ENCODE measurements at regions of chr20 and their contacts with region 1.

Region 1: GRCh38 chr20:44080646-44081267 is 106.2 kb downstream of the JPH2 start:
- DNase-seq: peak; percentile 84
- ATAC-seq: peak; percentile 96
- H3K4me3 Mint-ChIP-seq: peak overlapping the region; percentile 3
- H3K27ac Mint-ChIP-seq: no peak overlapping the region
- H3K4me1 Mint-ChIP-seq: peaks cover 16% of the 10 kb centered on the region
- H3K27me3 Mint-ChIP-seq: no peaks in the 10 kb centered on the region

Region 2: GRCh38 chr20:43537921-43538877 is 542.6 kb before region 1 on chr20:
- CTCF ChIA-PET with region 1: interaction called, 3 read pairs
- POLR2A ChIA-PET with region 1: no interaction called
- intact Hi-C with region 1: loop called (anchors 1 to 2 kb)
- DNase-seq: peak; percentile 70
- ATAC-seq: peak; percentile 47
- H3K4me3 Mint-ChIP-seq: no peak overlapping the region
- H3K27ac Mint-ChIP-seq: no peak overlapping the region
- H3K4me1 Mint-ChIP-seq: no peaks in the 10 kb centered on the region
- H3K27me3 Mint-ChIP-seq: no peaks in the 10 kb centered on the region

Region 3: GRCh38 chr20:43846516-43846905 is 234.2 kb before region 1 on chr20:
- CTCF ChIA-PET with region 1: interaction called, 3 read pairs
- POLR2A ChIA-PET with region 1: no interaction called
- intact Hi-C with region 1: loop called (anchors 2 kb)
- DNase-seq: peak; percentile 16
- ATAC-seq: peak; percentile 18
- H3K4me3 Mint-ChIP-seq: no peak overlapping the region
- H3K27ac Mint-ChIP-seq: no peak overlapping the region
- H3K4me1 Mint-ChIP-seq: peaks cover 22% of the 10 kb centered on the region
- H3K27me3 Mint-ChIP-seq: no peaks in the 10 kb centered on the region

Region 4: DNA sequence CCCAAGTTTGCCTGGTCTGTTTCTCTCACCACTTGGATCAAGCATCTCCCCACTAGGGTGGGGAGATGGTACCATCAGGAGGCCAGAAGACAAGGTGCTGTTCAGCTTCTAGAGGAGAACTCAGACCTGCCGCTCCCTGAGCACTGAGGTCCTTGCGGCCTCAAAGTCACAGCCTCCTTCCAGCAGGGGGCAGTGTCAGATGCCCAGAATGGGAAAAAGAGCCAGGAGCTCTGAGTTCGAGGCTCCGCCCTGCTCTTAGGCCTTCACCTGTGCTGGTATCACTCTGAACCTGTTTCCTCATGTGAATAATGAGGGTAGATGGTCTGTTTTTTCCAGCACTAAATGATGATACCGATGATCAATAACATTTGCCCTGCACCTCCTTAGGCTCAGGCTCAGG is 97.4 kb before region 1 on chr20:
- CTCF ChIA-PET with region 1: no interaction called
- POLR2A ChIA-PET with region 1: interaction called, 5 read pairs
- intact Hi-C with region 1: loop called (anchors 2 to 5 kb)
- DNase-seq: peak; percentile 80
- ATAC-seq: peak; percentile 34
- H3K4me3 Mint-ChIP-seq: no peak overlapping the region
- H3K27ac Mint-ChIP-seq: no peak overlapping the region
- H3K4me1 Mint-ChIP-seq: peaks cover 28% of the 10 kb centered on the region
- H3K27me3 Mint-ChIP-seq: peaks cover 2% of the 10 kb centered on the region

Measured in activated CD4-positive, alpha-beta T cell treated with anti-CD3 and anti-CD28 coated beads for 36 hours (primary cell).